ENCODE measurements at regions of chr22 and their contacts with region 1.

Region 1: DNA sequence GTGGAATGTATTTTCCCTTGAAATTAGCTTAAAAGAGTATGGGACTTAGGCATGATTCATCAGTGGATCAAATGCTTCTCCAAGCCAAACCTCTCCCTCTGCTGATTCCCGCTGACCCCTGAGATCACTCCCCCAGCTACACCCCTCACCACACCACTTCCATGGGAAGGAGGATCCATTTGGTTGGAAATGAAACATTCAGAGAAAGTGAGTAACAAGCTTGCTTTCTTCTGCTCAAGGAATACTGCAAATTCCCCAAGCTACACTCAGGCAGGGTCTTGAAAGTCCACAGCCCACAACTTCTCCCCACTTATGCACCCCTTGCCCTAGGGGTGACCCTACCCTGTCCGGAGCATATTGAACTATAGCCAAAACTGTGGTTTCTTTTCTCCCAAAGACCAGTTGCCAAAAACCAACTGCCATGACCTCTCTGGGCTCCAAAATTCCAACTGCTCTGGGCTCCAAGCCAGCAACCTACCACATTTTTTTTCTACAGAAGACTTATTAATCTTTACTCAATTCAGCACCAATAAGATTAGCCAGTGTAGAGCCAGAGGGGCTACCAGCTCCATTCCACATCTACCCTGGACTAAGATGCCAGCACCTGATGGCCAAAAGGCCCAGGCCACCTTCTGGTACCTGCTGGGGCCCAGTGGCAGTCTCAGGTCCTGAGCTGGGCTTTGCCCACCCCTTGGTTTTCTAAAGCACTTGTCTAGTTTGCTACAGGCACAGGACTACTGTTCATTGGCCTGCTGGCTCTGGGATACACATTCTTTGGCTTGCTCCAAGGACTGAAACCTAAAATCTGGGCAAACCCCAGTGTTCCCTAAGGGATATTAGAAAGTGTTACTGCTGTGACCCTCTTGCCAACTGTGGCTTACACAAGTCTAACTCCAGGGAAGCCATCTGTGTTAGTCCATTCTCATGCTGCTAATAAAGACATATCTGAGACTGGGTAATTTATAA is 101.2 kb downstream of the MICAL3 start:
- DNase-seq: no peak
- ATAC-seq: no peak
- H3K4me3 ChIP-seq: no peak overlapping the region
- H3K27ac ChIP-seq: peak overlapping the region in 9 of 10 donors; percentile 55 to 96 (median 88)
- H3K4me1 ChIP-seq: peaks cover 16 to 97% (median 70%) of the 10 kb centered on the region in 9 donors
- H3K27me3 ChIP-seq: no peaks in the 10 kb centered on the region
- CTCF ChIP-seq: no peak

Region 2: GRCh38 chr22:17994424-17995108 is 71.4 kb after region 1 on chr22:
- intact Hi-C with region 1: loop called in 2 of 10 experiments (anchors 5 to 10 kb)
- DNase-seq: no peak
- ATAC-seq: no peak
- H3K4me3 ChIP-seq: no peak overlapping the region
- H3K27ac ChIP-seq: no peak overlapping the region
- H3K4me1 ChIP-seq: peaks cover 5 to 85% (median 50%) of the 10 kb centered on the region in 9 donors
- H3K27me3 ChIP-seq: no peaks in the 10 kb centered on the region
- CTCF ChIP-seq: no peak